Mammary epithelial cell (primary cell): ENCODE measurements at regions of chr10 and their contacts with region 1.

Region 1: DNA sequence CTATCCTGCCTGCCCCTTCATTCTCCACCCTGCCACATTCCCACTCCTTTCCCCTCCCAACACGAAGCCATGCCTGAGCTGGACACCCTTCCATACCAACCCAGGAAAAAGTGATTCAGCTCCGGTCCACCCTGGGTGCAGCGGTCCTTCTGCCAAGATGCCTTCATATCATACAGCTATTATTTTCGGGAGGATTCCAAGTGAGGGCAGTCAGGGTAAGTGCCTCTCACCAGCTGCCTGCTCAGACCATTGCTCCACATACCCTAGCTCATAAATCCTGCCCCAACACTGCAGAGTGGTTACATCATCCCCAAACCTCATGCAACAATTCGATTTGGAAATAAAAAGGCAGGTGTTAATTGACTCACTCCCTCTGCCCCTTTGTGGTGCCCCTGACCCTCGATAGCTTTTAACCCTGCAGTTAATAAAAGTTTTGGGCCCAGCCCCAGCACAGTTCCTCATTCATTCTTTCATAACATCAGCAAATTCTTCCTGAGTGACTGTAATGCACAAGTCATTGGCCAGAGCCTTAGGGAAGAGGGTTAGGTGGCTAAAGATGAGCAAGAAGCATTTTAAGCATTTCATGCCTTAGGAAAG is 42.6 kb downstream of the ZNF503 start:
- DNase-seq: peak; percentile 94
- H3K4me3 ChIP-seq: no peak overlapping the region
- H3K27ac ChIP-seq: peak overlapping the region; percentile 53
- H3K4me1 ChIP-seq: peaks cover 23% of the 10 kb centered on the region
- H3K27me3 ChIP-seq: no peaks in the 10 kb centered on the region
- CTCF ChIP-seq: no peak

Region 2: GRCh38 chr10:75283671-75284470 is 75.1 kb before region 1 on chr10:
- CTCF ChIA-PET with region 1: no interaction called
- dilution Hi-C with region 1: loop called (anchors 5 kb)
- in situ Hi-C with region 1: no loop called
- intact Hi-C with region 1: no loop called
- DNase-seq: peak; percentile 14
- H3K4me3 ChIP-seq: no peak overlapping the region
- H3K27ac ChIP-seq: no peak overlapping the region
- H3K4me1 ChIP-seq: peaks cover 4% of the 10 kb centered on the region
- H3K27me3 ChIP-seq: no peaks in the 10 kb centered on the region
- CTCF ChIP-seq: no peak

Region 3: GRCh38 chr10:75294866-75295701 is 63.8 kb before region 1 on chr10:
- CTCF ChIA-PET with region 1: no interaction called
- dilution Hi-C with region 1: no loop called
- in situ Hi-C with region 1: no loop called
- intact Hi-C with region 1: loop called (anchors 2 kb)
- DNase-seq: peak; percentile 94
- H3K4me3 ChIP-seq: peak overlapping the region; percentile 4 to 54 (median 48)
- H3K27ac ChIP-seq: peak overlapping the region; percentile 51
- H3K4me1 ChIP-seq: peaks cover 14% of the 10 kb centered on the region
- H3K27me3 ChIP-seq: no peaks in the 10 kb centered on the region
- CTCF ChIP-seq: peak in 1 of 2 donors; percentile 28

Region 4: DNA sequence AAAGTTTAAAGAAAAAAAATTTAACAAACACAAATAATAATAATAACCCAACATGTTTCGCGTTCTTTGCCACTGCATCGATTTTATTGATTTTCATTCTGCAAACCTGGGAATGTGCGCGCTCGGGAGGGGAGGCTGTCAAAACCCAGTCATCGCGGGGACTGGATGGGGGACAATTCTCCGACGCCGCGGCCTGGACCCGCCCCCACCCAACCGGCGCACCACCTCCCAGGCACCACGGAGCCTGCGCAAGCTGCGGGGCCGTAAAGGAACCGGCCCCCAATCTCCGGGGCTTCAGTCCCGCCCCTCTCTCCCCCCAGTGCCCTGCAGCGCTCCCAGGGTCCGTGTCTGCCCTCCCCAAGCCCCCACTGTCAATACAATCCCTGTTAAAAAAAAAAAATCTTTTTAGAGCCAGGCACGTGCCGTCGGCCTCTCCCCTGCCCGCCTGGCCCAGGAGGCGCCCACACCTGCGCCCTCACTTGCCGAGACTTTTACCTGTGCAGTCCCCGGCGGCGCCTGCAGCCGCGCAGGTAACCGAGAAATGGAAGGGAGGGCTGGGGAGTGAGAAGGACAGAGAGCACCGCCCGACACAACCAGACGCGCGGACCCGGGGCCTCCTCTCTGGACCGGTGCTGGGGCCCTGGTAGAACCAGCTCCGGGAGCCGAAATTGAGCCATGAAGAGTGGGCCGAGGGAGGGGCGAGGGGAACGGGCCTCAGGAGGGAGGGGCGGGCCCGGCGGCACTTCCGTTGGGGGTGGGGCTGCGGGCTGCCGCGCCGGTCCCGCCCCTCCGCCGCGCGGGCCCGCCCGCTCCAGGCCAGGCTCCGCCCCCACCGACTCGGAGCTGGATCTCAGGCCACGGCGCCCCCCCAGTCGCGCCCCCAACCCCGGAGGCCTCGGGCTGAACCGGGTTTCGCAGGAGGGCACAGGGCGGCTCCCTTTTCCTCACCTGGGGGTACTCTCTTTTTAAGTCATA is 50.3 kb after region 1 on chr10:
- CTCF ChIA-PET with region 1: no interaction called
- dilution Hi-C with region 1: no loop called
- in situ Hi-C with region 1: no loop called
- intact Hi-C with region 1: no loop called
- DNase-seq: peak; percentile 81
- H3K4me3 ChIP-seq: peak overlapping the region; percentile 68 to 82 (median 79)
- H3K27ac ChIP-seq: peak overlapping the region; percentile 40
- H3K4me1 ChIP-seq: peaks cover 49% of the 10 kb centered on the region
- H3K27me3 ChIP-seq: no peaks in the 10 kb centered on the region
- CTCF ChIP-seq: peak in 1 of 2 donors; percentile 42